CD8-positive, alpha-beta memory T cell (primary cell): ENCODE measurements at regions of chr7 and their contacts with region 1.

Region 1: DNA sequence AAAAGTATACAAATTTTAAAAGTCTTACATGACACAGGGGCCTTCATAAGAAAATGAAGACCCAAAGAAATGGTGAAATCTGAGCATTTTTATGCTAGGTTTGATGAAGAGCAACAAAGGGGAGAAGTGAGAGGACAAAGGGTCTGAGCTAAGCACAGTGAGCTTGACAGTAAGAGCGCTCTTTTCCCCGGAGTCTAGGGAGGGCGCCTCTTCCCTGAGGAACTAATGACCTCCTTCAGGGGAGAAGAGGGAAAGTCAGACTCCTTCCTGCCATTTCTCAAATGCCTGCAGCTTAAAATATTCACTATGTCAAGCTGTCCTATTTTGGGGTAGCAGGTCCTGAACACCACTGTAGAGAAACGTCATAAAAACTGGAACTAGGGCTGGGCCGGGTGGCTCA is 18.1 kb upstream of the PAXIP1 start:
- DNase-seq: no peak
- H3K4me3 ChIP-seq: no peak overlapping the region
- H3K4me3 Mint-ChIP-seq: no peak overlapping the region
- H3K27ac ChIP-seq: no peak overlapping the region
- H3K27ac Mint-ChIP-seq: no peak overlapping the region
- H3K4me1 ChIP-seq: no peaks in the 10 kb centered on the region
- H3K4me1 Mint-ChIP-seq: no peaks in the 10 kb centered on the region
- H3K27me3 ChIP-seq: no peaks in the 10 kb centered on the region
- H3K27me3 Mint-ChIP-seq: peaks cover 7 to 15% of the 10 kb centered on the region in 2 donors

Region 2: GRCh38 chr7:155009570-155010157 is 11.3 kb before region 1 on chr7:
- CTCF ChIA-PET with region 1: interaction called, 24 read pairs
- POLR2A ChIA-PET with region 1: no interaction called
- DNase-seq: peak in 1 of 5 donors; percentile 13
- H3K4me3 ChIP-seq: no peak overlapping the region
- H3K4me3 Mint-ChIP-seq: peak overlapping the region in 1 of 7 donors; percentile 14
- H3K27ac ChIP-seq: no peak overlapping the region
- H3K27ac Mint-ChIP-seq: peak overlapping the region in 2 of 8 donors; percentile 1 to 40
- H3K4me1 ChIP-seq: peaks cover 2% of the 10 kb centered on the region
- H3K4me1 Mint-ChIP-seq: peaks cover 3 to 9% (median 7%) of the 10 kb centered on the region in 3 donors
- H3K27me3 ChIP-seq: no peaks in the 10 kb centered on the region
- H3K27me3 Mint-ChIP-seq: peaks cover 0 to 1% of the 10 kb centered on the region in 2 donors

Region 3: GRCh38 chr7:155145477-155146255 is 124.7 kb after region 1 on chr7:
- CTCF ChIA-PET with region 1: no interaction called
- POLR2A ChIA-PET with region 1: no interaction called
- DNase-seq: no peak
- H3K4me3 ChIP-seq: no peak overlapping the region
- H3K4me3 Mint-ChIP-seq: no peak overlapping the region
- H3K27ac ChIP-seq: no peak overlapping the region
- H3K27ac Mint-ChIP-seq: no peak overlapping the region
- H3K4me1 ChIP-seq: no peaks in the 10 kb centered on the region
- H3K4me1 Mint-ChIP-seq: no peaks in the 10 kb centered on the region
- H3K27me3 ChIP-seq: peaks cover 12% of the 10 kb centered on the region
- H3K27me3 Mint-ChIP-seq: peaks cover 13 to 61% of the 10 kb centered on the region in 2 donors